ENCODE measurements at regions of chr17 and their contacts with region 1.

Region 1: GRCh38 chr17:40026816-40027613 is 11.8 kb downstream of the CSF3 start:
- DNase-seq: peak; percentile 45 to 87 (median 78)
- ATAC-seq: peak; percentile 88
- H3K4me3 ChIP-seq: no peak overlapping the region
- H3K4me3 Mint-ChIP-seq: no peak overlapping the region
- H3K27ac ChIP-seq: no peak overlapping the region
- H3K27ac Mint-ChIP-seq: no peak overlapping the region
- H3K4me1 ChIP-seq: peaks cover 21% of the 10 kb centered on the region
- H3K4me1 Mint-ChIP-seq: peaks cover 22% of the 10 kb centered on the region
- H3K27me3 ChIP-seq: no peaks in the 10 kb centered on the region
- H3K27me3 Mint-ChIP-seq: no peaks in the 10 kb centered on the region
- CTCF ChIP-seq: peak; percentile 79

Region 2: DNA sequence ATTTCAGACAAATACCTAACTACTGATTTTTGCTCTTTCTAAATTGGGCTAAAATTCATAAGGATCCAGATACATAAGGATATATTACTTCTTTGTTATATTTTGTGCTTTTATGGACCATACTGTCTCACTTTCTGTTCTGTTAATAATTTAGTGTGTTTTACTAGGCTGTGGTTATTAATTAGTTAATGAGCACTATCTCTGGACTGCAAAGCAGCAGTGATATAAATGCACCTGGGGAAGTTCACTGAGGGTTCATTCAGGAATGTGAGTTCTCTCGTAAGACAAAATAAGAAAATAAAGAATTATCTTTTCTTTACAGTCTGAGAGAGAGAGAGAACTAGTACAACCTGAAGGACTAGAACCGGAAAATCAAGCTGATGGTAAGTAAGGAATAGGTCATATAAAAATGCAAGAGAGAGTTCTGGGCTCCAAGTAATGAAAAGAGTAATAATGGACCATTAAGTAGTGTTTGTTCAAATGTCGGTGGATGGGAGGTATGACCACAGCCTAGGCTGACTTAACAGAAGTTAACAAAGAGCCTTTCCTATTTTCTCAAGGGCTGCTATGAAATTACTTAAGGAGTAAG is 218.5 kb before region 1 on chr17:
- CTCF ChIA-PET with region 1: no interaction called
- POLR2A ChIA-PET with region 1: no interaction called
- intact Hi-C with region 1: no loop called
- DNase-seq: no peak
- ATAC-seq: no peak
- H3K4me3 ChIP-seq: no peak overlapping the region
- H3K4me3 Mint-ChIP-seq: no peak overlapping the region
- H3K27ac ChIP-seq: no peak overlapping the region
- H3K27ac Mint-ChIP-seq: peak overlapping the region; percentile 53
- H3K4me1 ChIP-seq: peaks cover 61% of the 10 kb centered on the region
- H3K4me1 Mint-ChIP-seq: peaks cover 79% of the 10 kb centered on the region
- H3K27me3 ChIP-seq: no peaks in the 10 kb centered on the region
- H3K27me3 Mint-ChIP-seq: no peaks in the 10 kb centered on the region
- CTCF ChIP-seq: no peak

Region 3: GRCh38 chr17:39939588-39940419 is 87.2 kb before region 1 on chr17:
- CTCF ChIA-PET with region 1: no interaction called
- POLR2A ChIA-PET with region 1: no interaction called
- intact Hi-C with region 1: no loop called
- DNase-seq: peak in 4 of 9 experiments; percentile 25 to 74 (median 54)
- ATAC-seq: peak; percentile 95
- H3K4me3 ChIP-seq: no peak overlapping the region
- H3K4me3 Mint-ChIP-seq: no peak overlapping the region
- H3K27ac ChIP-seq: no peak overlapping the region
- H3K27ac Mint-ChIP-seq: peak overlapping the region; percentile 38
- H3K4me1 ChIP-seq: peaks cover 10% of the 10 kb centered on the region
- H3K4me1 Mint-ChIP-seq: peaks cover 14% of the 10 kb centered on the region
- H3K27me3 ChIP-seq: no peaks in the 10 kb centered on the region
- H3K27me3 Mint-ChIP-seq: no peaks in the 10 kb centered on the region
- CTCF ChIP-seq: no peak

Region 4: GRCh38 chr17:40038882-40039513 is 12.0 kb after region 1 on chr17:
- CTCF ChIA-PET with region 1: interaction called, 35 read pairs
- POLR2A ChIA-PET with region 1: no interaction called
- intact Hi-C with region 1: no loop called
- DNase-seq: peak in 2 of 9 experiments; percentile 31 to 44
- ATAC-seq: no peak
- H3K4me3 ChIP-seq: no peak overlapping the region
- H3K4me3 Mint-ChIP-seq: no peak overlapping the region
- H3K27ac ChIP-seq: no peak overlapping the region
- H3K27ac Mint-ChIP-seq: no peak overlapping the region
- H3K4me1 ChIP-seq: no peaks in the 10 kb centered on the region
- H3K4me1 Mint-ChIP-seq: peaks cover 3% of the 10 kb centered on the region
- H3K27me3 ChIP-seq: no peaks in the 10 kb centered on the region
- H3K27me3 Mint-ChIP-seq: no peaks in the 10 kb centered on the region
- CTCF ChIP-seq: peak; percentile 30

Region 5: GRCh38 chr17:40091691-40092397 is 64.8 kb after region 1 on chr17:
- CTCF ChIA-PET with region 1: interaction called, 13 read pairs
- POLR2A ChIA-PET with region 1: no interaction called
- intact Hi-C with region 1: no loop called
- DNase-seq: peak in 1 of 9 experiments; percentile 22
- ATAC-seq: no peak
- H3K4me3 ChIP-seq: no peak overlapping the region
- H3K4me3 Mint-ChIP-seq: no peak overlapping the region
- H3K27ac ChIP-seq: no peak overlapping the region
- H3K27ac Mint-ChIP-seq: no peak overlapping the region
- H3K4me1 ChIP-seq: peaks cover 23% of the 10 kb centered on the region
- H3K4me1 Mint-ChIP-seq: peaks cover 38% of the 10 kb centered on the region
- H3K27me3 ChIP-seq: no peaks in the 10 kb centered on the region
- H3K27me3 Mint-ChIP-seq: no peaks in the 10 kb centered on the region
- CTCF ChIP-seq: no peak

Region 6: DNA sequence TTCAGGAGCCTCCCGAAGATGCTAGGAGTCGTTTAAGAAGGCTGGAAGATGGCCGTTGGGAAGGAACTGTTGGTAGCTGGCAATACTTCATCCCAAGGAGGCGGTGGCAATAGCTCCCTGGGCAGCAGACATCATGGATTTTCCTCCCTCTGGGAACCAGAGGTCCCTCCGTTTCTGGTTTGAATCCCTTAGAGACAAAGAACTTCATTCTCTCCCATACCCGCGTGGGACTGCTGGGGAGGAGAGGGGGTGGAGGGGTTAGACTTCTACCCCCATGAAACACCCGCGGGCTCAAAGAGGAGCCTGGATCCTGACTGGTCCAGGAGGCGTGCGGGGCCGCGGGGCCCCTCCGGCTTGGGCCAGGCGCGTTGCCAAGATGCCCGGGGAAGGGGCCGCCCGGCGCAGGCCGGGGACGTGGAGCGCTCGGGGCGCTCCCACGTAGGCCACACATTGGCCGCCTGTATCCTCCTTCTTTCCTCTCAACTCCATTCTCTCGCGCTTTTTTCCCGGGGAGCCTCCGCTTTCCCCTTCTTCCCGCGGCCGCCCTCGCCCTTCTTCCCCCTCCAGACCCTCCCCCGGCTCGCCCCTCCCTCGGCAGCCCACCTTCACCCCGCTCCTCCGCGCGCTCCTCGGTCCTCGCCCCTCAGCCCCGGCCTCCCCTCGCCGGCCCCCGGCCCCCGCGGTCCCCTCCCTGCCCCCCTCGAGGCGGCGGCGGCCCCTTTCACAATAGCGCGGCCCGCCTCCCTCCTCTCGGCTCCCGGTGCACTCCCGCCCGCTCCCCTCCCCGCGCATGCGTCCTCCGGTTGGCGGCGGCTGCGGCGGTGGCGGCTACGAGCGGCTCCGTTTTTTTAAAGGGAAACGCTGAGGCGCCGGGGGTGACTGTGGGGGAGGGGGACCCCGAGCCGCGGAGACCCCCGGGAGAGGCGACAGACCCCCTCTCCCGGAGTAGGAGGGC is 94.4 kb after region 1 on chr17 and contains the start of gene MSL1:
- CTCF ChIA-PET with region 1: interaction called, 11 read pairs
- POLR2A ChIA-PET with region 1: no interaction called
- intact Hi-C with region 1: no loop called
- DNase-seq: peak; percentile 69 to 92 (median 85)
- ATAC-seq: peak; percentile 65
- H3K4me3 ChIP-seq: peak within 1 kb of the TSS; percentile 75 to 93
- H3K4me3 Mint-ChIP-seq: peak within 1 kb of the TSS; percentile 81
- H3K27ac ChIP-seq: peak within 1 kb of the TSS; percentile 40 to 71
- H3K27ac Mint-ChIP-seq: peak within 1 kb of the TSS; percentile 83
- H3K4me1 ChIP-seq: peaks cover 14% of the 10 kb centered on the region
- H3K4me1 Mint-ChIP-seq: peaks cover 44% of the 10 kb centered on the region
- H3K27me3 ChIP-seq: no peaks in the 10 kb centered on the region
- H3K27me3 Mint-ChIP-seq: no peaks in the 10 kb centered on the region
- CTCF ChIP-seq: no peak
- total RNA-seq, gene MSL1: 43.8 to 46.6 TPM

Measured in CD8-positive, alpha-beta T cell (primary cell).